Activated CD4-positive, alpha-beta T cell treated with anti-CD3 and anti-CD28 coated beads, Interleukin-2, amount 10 ng/mL, durations not matched to agents 24 days and 14 days (primary cell): ENCODE measurements at regions of chr5 and their contacts with region 1.

Region 1: GRCh38 chr5:138178516-138179276 is at the starts of genes BRD8 and KIF20A:
- DNase-seq: peak; percentile 97
- H3K4me3 Mint-ChIP-seq: no peak within 1 kb of the TSS
- H3K27ac Mint-ChIP-seq: no peak within 1 kb of the TSS
- H3K4me1 Mint-ChIP-seq: peaks cover 20% of the 10 kb centered on the region
- H3K27me3 Mint-ChIP-seq: no peaks in the 10 kb centered on the region
- total RNA-seq, gene BRD8: 53.6 and 61.1 TPM in 2 replicates
- total RNA-seq, gene KIF20A: 18.0 and 19.7 TPM in 2 replicates

Region 2: GRCh38 chr5:137901011-137901817 is 277.5 kb before region 1 on chr5:
- intact Hi-C with region 1: no loop called
- DNase-seq: no peak
- H3K4me3 Mint-ChIP-seq: no peak overlapping the region
- H3K27ac Mint-ChIP-seq: no peak overlapping the region
- H3K4me1 Mint-ChIP-seq: no peaks in the 10 kb centered on the region
- H3K27me3 Mint-ChIP-seq: peaks cover 6% of the 10 kb centered on the region

Region 3: DNA sequence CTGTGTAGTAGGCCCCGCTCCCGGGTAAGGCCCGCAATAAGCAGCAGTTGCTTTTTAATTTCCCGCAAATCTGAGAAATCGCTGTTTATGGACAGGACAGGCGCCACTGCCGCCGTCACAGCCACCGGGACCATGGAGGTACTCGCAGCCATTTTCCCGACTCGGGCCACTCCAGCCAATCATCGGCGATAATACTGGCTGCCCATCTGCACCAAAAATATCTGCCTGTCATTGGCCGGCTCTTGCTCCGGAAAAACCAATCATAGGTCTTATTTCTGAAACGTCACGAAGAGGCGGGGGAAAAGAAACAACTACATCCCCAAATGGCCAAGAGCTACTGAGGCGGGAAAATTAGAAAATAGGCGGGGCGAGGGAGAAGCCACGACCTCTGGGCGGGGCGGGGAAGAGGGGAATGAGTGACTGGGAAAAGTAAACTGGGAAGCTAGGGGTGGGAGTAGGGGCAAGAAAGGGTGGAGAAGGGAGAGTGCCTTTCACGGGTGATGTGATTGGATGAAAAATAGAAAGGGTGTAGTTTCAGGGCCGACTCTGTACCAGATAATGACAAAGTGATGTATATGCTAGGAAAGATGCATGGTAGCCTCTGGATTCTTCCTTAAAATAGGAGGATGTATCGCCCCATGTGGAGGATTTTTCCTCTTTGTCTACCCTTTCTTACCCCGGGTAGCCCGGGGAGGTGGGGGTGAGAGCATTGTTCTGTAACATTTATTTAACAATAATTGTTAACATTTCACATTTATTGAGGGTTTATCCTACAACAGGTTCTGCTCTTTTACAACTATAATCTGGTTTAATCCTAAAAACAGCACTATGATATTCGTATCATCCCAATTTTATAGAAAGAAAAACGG is 34.7 kb after region 1 on chr5 and contains the start of gene CDC23:
- intact Hi-C with region 1: loop called (anchors 1 kb)
- DNase-seq: peak; percentile 98
- H3K4me3 Mint-ChIP-seq: peak within 1 kb of the TSS; percentile 97
- H3K27ac Mint-ChIP-seq: peak within 1 kb of the TSS; percentile 96
- H3K4me1 Mint-ChIP-seq: peaks cover 14% of the 10 kb centered on the region
- H3K27me3 Mint-ChIP-seq: no peaks in the 10 kb centered on the region
- total RNA-seq, gene CDC23: 46.6 and 47.9 TPM in 2 replicates

Region 4: DNA sequence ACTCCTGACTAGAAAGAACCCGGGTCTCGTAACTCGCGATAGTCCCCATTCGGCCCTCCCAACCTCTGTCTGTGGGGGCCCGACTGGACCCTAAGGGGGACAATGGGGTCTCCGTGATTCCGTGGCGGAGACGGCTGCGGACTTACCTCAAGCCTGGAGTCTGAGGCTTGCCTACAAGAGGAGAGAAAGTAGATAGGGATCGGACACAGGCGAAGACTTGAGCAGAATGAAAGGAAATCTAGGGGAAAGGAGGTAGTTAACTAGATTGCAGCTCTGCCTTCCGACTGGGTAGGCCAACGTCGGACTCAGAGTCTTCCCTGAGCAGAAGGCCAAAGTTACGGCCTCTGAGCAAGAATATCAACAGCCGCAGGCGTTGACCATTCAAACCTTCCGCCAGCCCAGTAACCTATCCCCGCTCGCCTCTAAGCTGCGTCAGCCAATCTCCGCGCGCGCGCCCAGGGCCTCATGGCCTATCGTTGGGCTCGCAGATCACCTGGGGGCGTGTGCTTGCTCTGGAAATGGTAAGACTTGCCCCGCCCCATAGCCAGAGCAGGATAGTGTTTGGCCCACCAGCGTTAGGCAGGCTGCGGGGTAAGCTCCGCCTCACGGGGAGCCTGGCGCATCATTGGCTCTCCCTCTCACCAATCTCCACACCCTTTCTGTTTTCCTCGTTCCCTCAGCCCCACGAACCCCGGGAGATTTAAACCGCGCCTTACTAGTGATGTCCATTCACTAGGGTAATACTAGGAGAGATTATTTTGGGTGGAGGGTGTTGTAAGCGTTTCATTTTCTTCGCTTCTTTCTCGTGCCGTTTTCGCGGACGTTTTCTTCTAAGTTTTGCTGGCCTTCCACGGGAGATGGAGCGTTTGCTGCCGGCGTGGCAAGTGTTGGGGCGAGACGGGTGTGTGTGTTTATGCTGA is 153.0 kb after region 1 on chr5 and contains the start of gene CDC25C:
- intact Hi-C with region 1: loop called (anchors 1 kb)
- DNase-seq: peak; percentile 99
- H3K4me3 Mint-ChIP-seq: peak within 1 kb of the TSS; percentile 89
- H3K27ac Mint-ChIP-seq: peak within 1 kb of the TSS; percentile 57
- H3K4me1 Mint-ChIP-seq: peaks cover 30% of the 10 kb centered on the region
- H3K27me3 Mint-ChIP-seq: no peaks in the 10 kb centered on the region
- total RNA-seq, gene CDC25C: 6.7 and 7.9 TPM in 2 replicates

Region 5: GRCh38 chr5:138352071-138352721 is 173.5 kb after region 1 on chr5 and contains the start of gene KDM3B:
- intact Hi-C with region 1: loop called (anchors 2 kb)
- DNase-seq: peak; percentile 99
- H3K4me3 Mint-ChIP-seq: peak within 1 kb of the TSS; percentile 95
- H3K27ac Mint-ChIP-seq: peak within 1 kb of the TSS; percentile 95
- H3K4me1 Mint-ChIP-seq: peaks cover 37% of the 10 kb centered on the region
- H3K27me3 Mint-ChIP-seq: no peaks in the 10 kb centered on the region
- total RNA-seq, gene KDM3B: 48.7 and 52.7 TPM in 2 replicates

Region 6: GRCh38 chr5:138464008-138464387 is 285.3 kb after region 1 on chr5:
- intact Hi-C with region 1: loop called (anchors 1 kb)
- DNase-seq: peak; percentile 98
- H3K4me3 Mint-ChIP-seq: peak overlapping the region; percentile 90
- H3K27ac Mint-ChIP-seq: peak overlapping the region; percentile 93
- H3K4me1 Mint-ChIP-seq: peaks cover 47% of the 10 kb centered on the region
- H3K27me3 Mint-ChIP-seq: peaks cover 6% of the 10 kb centered on the region